ENCODE measurements at regions of chrX and their contacts with region 1.

Region 1: DNA sequence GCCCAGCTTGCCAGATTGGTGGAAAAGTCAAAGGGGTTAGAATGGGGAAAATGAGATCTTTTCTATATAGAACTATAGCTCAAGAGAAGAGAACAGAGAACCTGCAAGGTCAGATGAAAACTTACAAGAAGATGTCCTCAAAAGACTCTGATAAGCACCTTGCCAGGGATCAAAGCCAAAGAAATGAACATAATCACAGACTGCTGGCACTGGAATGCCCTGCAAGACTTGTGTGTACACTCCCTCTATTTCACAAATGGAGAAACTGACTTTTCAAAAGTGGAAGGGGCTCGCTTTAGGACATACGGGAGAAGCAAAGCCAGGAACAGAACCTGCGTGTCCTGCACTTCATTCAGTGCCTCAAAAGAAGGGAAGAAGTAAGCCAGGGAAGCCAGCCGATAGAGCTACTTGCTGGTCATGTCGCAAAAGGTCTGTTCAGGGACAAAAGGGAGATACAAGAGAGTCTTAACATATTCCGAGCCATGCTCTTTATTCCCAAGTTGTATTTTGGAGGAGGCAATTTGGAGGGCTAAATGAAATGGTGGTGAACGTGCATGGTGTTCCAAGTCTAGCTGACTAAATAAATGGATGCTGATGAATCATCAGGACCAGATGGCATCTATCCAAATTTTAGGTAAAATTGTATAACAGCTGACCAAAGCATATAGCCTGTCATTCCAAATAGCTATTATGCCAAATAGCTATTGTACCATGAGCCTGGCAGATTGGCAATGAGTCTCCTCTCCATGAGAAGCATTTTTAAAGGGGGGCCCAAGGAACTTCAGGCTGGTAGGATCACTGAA is 175.6 kb upstream of the GPC4 start:
- DNase-seq: no peak
- H3K4me3 ChIP-seq: no peak overlapping the region
- H3K27ac ChIP-seq: no peak overlapping the region
- H3K4me1 ChIP-seq: no peaks in the 10 kb centered on the region
- H3K27me3 ChIP-seq: no peaks in the 10 kb centered on the region
- CTCF ChIP-seq: no peak
- POLR2A ChIP-seq: no peak

Region 2: DNA sequence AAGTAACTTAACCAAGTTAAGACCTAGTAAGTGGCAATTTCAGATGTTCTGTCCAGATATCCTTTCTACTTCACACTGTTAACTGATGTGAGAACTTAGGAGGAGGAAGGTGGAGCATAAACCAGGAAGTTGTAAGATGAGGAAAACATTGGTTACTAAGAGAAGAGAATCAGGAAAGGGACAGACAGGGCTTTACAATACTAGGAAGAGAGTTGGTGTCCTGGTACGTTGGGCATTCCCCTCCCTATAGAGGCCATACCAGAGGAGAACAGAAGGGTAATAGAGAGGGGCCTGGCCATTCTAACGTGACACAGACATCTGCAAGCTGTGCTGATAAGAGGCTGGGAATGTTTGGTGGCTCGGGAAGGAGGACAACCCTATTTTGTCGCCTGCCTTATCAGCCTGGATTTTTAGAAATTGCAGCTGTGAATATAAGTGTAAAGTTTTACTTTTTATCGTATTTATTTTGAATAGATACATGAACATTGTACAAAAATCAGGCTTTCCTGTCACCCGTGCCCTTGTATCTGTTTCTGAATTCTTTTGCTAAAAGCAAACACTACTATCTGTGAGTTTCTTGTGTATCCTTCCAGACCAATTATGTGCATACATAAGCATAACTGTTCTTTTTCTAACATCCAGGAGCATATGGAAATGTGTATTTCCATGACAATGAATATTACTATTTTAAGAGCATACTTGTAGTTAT is 815.6 kb after region 1 on chrX:
- intact Hi-C with region 1: loop called (anchors 5 kb)
- DNase-seq: no peak
- H3K4me3 ChIP-seq: no peak overlapping the region
- H3K27ac ChIP-seq: no peak overlapping the region
- H3K4me1 ChIP-seq: no peaks in the 10 kb centered on the region
- H3K27me3 ChIP-seq: no peaks in the 10 kb centered on the region
- CTCF ChIP-seq: no peak
- POLR2A ChIP-seq: no peak

Measured in vagina (tissue), 2 donors.